CD4-positive, alpha-beta memory T cell (primary cell): ENCODE measurements at regions of chr1 and their contacts with region 1.

Region 1: GRCh38 chr1:212814537-212815334 is 23.0 kb downstream of the TATDN3 start:
- DNase-seq: peak in 1 of 5 donors; percentile 6
- H3K4me3 ChIP-seq: no peak overlapping the region
- H3K4me3 Mint-ChIP-seq: no peak overlapping the region
- H3K27ac ChIP-seq: no peak overlapping the region
- H3K27ac Mint-ChIP-seq: peak overlapping the region in 1 of 7 donors; percentile 42
- H3K4me1 ChIP-seq: no peaks in the 10 kb centered on the region
- H3K4me1 Mint-ChIP-seq: no peaks in the 10 kb centered on the region
- H3K27me3 ChIP-seq: no peaks in the 10 kb centered on the region
- H3K27me3 Mint-ChIP-seq: no peaks in the 10 kb centered on the region

Region 2: GRCh38 chr1:212827824-212828278 is 13.1 kb after region 1 on chr1:
- CTCF ChIA-PET with region 1: no interaction called
- POLR2A ChIA-PET with region 1: no interaction called
- intact Hi-C with region 1: no loop called
- DNase-seq: no peak
- H3K4me3 ChIP-seq: no peak overlapping the region
- H3K4me3 Mint-ChIP-seq: no peak overlapping the region
- H3K27ac ChIP-seq: no peak overlapping the region
- H3K27ac Mint-ChIP-seq: no peak overlapping the region
- H3K4me1 ChIP-seq: no peaks in the 10 kb centered on the region
- H3K4me1 Mint-ChIP-seq: no peaks in the 10 kb centered on the region
- H3K27me3 ChIP-seq: no peaks in the 10 kb centered on the region
- H3K27me3 Mint-ChIP-seq: peaks cover 0 to 2% of the 10 kb centered on the region in 2 donors

Region 3: DNA sequence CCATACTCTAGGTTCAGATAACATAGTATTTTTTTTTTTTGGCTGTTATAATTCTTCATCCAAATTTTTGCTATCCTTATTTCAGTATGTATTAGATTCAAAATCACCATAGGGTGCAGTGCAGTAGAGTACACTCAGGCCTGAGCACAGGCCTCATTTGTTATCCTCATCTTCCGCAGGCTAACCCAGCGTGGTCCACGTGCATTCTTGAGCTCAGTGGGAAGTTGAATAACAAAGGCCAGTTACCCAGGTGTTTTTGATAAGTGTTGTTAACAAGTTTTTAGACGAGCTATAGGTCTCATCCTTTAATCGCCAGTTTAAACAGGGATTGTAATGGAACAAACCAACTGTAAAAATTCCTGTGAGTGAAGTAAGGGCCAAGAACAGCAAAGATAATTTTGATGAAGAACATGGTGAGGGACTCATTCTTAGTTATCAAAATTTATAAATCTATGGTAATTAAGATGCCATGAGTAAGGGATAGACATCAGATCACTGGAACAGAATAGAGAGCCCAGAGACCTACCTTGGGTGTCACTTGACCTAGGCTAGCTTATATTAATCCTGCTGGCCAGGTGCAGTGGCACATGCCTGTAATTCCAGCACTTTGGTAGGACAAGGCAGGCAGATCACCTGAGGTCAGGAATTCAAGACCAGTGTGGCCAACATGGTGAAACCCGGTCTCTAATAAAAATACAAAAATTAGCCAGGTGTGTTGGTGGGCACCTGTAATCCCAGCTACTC is 65.4 kb after region 1 on chr1:
- CTCF ChIA-PET with region 1: no interaction called
- POLR2A ChIA-PET with region 1: no interaction called
- intact Hi-C with region 1: loop called (anchors 5 kb)
- DNase-seq: no peak
- H3K4me3 ChIP-seq: no peak overlapping the region
- H3K4me3 Mint-ChIP-seq: no peak overlapping the region
- H3K27ac ChIP-seq: no peak overlapping the region
- H3K27ac Mint-ChIP-seq: peak overlapping the region in 1 of 7 donors; percentile 55
- H3K4me1 ChIP-seq: no peaks in the 10 kb centered on the region
- H3K4me1 Mint-ChIP-seq: no peaks in the 10 kb centered on the region
- H3K27me3 ChIP-seq: no peaks in the 10 kb centered on the region
- H3K27me3 Mint-ChIP-seq: no peaks in the 10 kb centered on the region

Region 4: GRCh38 chr1:212994926-212995325 is 180.2 kb after region 1 on chr1:
- CTCF ChIA-PET with region 1: interaction called, 11 read pairs
- POLR2A ChIA-PET with region 1: no interaction called
- intact Hi-C with region 1: loop called (anchors 2 kb)
- DNase-seq: no peak
- H3K4me3 ChIP-seq: no peak overlapping the region
- H3K4me3 Mint-ChIP-seq: no peak overlapping the region
- H3K27ac ChIP-seq: no peak overlapping the region
- H3K27ac Mint-ChIP-seq: no peak overlapping the region
- H3K4me1 ChIP-seq: no peaks in the 10 kb centered on the region
- H3K4me1 Mint-ChIP-seq: peaks cover 3 to 6% (median 5%) of the 10 kb centered on the region in 4 donors
- H3K27me3 ChIP-seq: no peaks in the 10 kb centered on the region
- H3K27me3 Mint-ChIP-seq: no peaks in the 10 kb centered on the region

Region 5: GRCh38 chr1:213070406-213070805 is 255.7 kb after region 1 on chr1:
- CTCF ChIA-PET with region 1: no interaction called
- POLR2A ChIA-PET with region 1: no interaction called
- intact Hi-C with region 1: no loop called
- DNase-seq: no peak
- H3K4me3 ChIP-seq: no peak overlapping the region
- H3K4me3 Mint-ChIP-seq: no peak overlapping the region
- H3K27ac ChIP-seq: no peak overlapping the region
- H3K27ac Mint-ChIP-seq: no peak overlapping the region
- H3K4me1 ChIP-seq: no peaks in the 10 kb centered on the region
- H3K4me1 Mint-ChIP-seq: peaks cover 0 to 15% (median 8%) of the 10 kb centered on the region in 4 donors
- H3K27me3 ChIP-seq: no peaks in the 10 kb centered on the region
- H3K27me3 Mint-ChIP-seq: no peaks in the 10 kb centered on the region